Activated CD4-positive, alpha-beta T cell treated with anti-CD3 and anti-CD28 coated beads, Interleukin-2, amount 10 ng/mL, durations not matched to agents 24 days and 14 days (primary cell): ENCODE measurements at regions of chr17 and their contacts with region 1.

Region 1: GRCh38 chr17:63946440-63947367 is 14.6 kb upstream of the CD79B start:
- DNase-seq: peak; percentile 90
- H3K4me3 Mint-ChIP-seq: peak overlapping the region; percentile 71
- H3K27ac Mint-ChIP-seq: peak overlapping the region; percentile 74
- H3K4me1 Mint-ChIP-seq: peaks cover 11% of the 10 kb centered on the region
- H3K27me3 Mint-ChIP-seq: peaks cover 4% of the 10 kb centered on the region

Region 2: DNA sequence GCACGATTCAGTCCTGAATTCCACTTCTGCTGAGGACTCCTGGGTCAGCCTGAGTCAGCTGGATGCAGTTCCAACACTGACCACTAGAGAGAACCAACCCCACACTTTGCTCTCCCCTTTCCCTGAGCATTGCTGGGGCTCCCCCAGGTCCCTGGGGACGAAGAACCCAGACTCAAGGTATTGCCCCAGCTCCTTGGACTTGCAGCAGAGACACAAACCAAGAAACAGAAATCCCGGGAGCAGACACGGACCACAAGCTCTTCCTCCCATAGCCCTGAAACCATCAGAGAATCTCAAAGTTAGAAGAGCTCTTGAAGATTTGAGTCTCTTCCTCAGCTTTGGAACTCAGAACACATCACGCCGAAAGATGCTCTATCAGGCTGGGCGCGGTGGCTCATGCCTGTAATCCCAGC is 27.4 kb before region 1 on chr17:
- intact Hi-C with region 1: loop called (anchors 1 kb)
- DNase-seq: peak; percentile 93
- H3K4me3 Mint-ChIP-seq: no peak overlapping the region
- H3K27ac Mint-ChIP-seq: peak overlapping the region; percentile 66
- H3K4me1 Mint-ChIP-seq: peaks cover 9% of the 10 kb centered on the region
- H3K27me3 Mint-ChIP-seq: peaks cover 10% of the 10 kb centered on the region

Region 3: DNA sequence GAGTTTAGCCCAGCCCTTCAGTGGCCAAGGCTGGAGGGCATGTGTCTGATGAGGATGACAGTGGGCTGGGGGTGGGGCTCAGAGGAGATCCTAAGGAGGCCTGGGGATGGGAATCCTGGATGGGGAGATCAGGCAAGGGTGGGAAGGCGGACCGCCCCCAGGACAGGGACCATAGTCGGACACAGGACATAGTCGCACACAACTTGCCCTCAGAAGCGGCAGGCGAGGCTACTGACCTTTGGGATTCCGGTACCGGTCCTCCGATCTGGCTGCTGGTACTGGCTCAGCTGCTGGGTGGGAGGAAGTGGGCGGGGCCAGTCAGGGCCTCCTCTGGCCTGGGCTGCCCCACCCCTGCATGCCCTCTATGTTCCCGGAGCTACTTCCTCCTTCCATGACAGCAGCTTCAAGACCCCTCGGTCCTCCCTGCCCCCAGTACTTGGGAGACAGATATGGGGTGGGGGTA is 15.6 kb before region 1 on chr17:
- intact Hi-C with region 1: loop called (anchors 1 kb)
- DNase-seq: peak; percentile 89
- H3K4me3 Mint-ChIP-seq: peak overlapping the region; percentile 98
- H3K27ac Mint-ChIP-seq: peak overlapping the region; percentile 95
- H3K4me1 Mint-ChIP-seq: peaks cover 18% of the 10 kb centered on the region
- H3K27me3 Mint-ChIP-seq: peaks cover 5% of the 10 kb centered on the region

Region 4: GRCh38 chr17:63961355-63962212 is 14.9 kb after region 1 on chr17:
- intact Hi-C with region 1: loop called (anchors 2 kb)
- DNase-seq: peak; percentile 80
- H3K4me3 Mint-ChIP-seq: peak overlapping the region; percentile 74
- H3K27ac Mint-ChIP-seq: peak overlapping the region; percentile 37
- H3K4me1 Mint-ChIP-seq: peaks cover 5% of the 10 kb centered on the region
- H3K27me3 Mint-ChIP-seq: peaks cover 3% of the 10 kb centered on the region